ENCODE measurements at regions of chr21 and their contacts with region 1.

Region 1: GRCh38 chr21:14382835-14383594 is at the start of gene HSPA13:
- DNase-seq: peak; percentile 95 to 100 (median 98)
- ATAC-seq: peak; percentile 93
- H3K4me3 ChIP-seq: peak within 1 kb of the TSS; percentile 80
- H3K4me3 Mint-ChIP-seq: peak within 1 kb of the TSS; percentile 96
- H3K27ac ChIP-seq: peak within 1 kb of the TSS; percentile 86
- H3K27ac Mint-ChIP-seq: peak within 1 kb of the TSS; percentile 97
- H3K4me1 ChIP-seq: peaks cover 17% of the 10 kb centered on the region
- H3K4me1 Mint-ChIP-seq: peaks cover 44% of the 10 kb centered on the region
- H3K27me3 ChIP-seq: no peaks in the 10 kb centered on the region
- H3K27me3 Mint-ChIP-seq: no peaks in the 10 kb centered on the region
- CTCF ChIP-seq: no peak
- total RNA-seq, gene HSPA13: 39.6 to 41.4 TPM

Region 2: DNA sequence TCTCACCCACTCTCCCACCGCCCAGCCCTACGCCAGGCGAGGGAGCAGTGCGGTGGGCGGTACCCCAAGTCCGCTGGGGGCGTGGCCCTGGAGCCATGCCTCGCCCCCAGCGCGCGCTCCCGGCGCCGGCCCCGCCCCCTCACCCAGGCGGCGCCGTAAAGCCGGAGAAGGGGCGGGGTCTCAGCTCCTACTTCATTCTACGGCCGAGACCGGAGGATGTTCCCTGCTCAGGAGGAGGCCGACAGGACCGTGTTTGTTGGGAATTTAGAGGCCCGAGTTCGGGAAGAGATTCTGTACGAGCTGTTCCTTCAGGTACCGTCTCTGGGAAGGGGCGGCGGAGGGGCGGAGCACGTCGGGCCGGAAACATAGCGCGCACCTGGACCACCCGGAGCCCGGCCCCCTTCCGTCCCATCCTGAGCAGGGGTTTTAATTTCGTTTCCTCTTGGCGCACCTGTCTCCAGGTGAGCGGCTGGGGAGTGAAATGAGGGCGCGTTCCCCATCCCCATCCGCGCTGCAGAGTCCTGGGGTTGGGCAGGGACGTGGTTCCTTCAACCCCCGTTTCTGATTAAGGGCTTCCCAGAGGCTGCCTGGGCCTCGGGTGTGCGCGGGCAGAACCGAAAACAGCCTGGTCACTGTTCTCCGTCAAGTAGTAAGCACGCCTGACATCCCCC is 166.9 kb before region 1 on chr21 and contains the start of gene RBM11:
- CTCF ChIA-PET with region 1: no interaction called
- POLR2A ChIA-PET with region 1: interaction called, 3 read pairs
- intact Hi-C with region 1: loop called in 1 of 2 experiments (anchors 5 kb)
- DNase-seq: peak; percentile 56 to 90 (median 74)
- ATAC-seq: peak; percentile 97
- H3K4me3 ChIP-seq: peak within 1 kb of the TSS; percentile 81
- H3K4me3 Mint-ChIP-seq: peak within 1 kb of the TSS; percentile 92
- H3K27ac ChIP-seq: peak within 1 kb of the TSS in 1 of 2 donors; percentile 50
- H3K27ac Mint-ChIP-seq: peak within 1 kb of the TSS; percentile 66
- H3K4me1 ChIP-seq: peaks cover 10% of the 10 kb centered on the region
- H3K4me1 Mint-ChIP-seq: peaks cover 8% of the 10 kb centered on the region
- H3K27me3 ChIP-seq: no peaks in the 10 kb centered on the region
- H3K27me3 Mint-ChIP-seq: no peaks in the 10 kb centered on the region
- CTCF ChIP-seq: no peak
- total RNA-seq, gene RBM11: 17.4 to 18.7 TPM

Region 3: DNA sequence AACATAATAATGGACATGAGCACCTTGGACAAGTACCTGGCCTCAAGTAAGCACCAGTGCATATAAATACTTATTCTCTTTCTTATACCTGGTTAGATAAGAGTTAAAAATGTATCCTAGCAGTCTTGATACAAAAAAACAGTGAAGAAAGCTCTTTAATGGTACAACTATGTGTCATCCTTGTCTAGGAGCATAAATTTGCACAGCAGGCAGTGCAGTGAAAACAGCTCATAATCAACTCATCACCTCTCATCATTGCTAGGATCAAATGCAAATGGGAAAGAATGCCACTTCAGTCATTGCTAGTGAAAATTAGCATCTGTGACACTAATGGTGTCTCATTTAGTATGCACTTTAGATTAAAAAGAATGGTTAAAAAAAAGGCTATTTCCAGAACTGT is 155.5 kb after region 1 on chr21:
- CTCF ChIA-PET with region 1: no interaction called
- POLR2A ChIA-PET with region 1: no interaction called
- intact Hi-C with region 1: loop called in 1 of 2 experiments (anchors 5 kb)
- DNase-seq: no peak
- ATAC-seq: no peak
- H3K4me3 ChIP-seq: no peak overlapping the region
- H3K4me3 Mint-ChIP-seq: peak overlapping the region; percentile 26
- H3K27ac ChIP-seq: no peak overlapping the region
- H3K27ac Mint-ChIP-seq: peak overlapping the region; percentile 47
- H3K4me1 ChIP-seq: peaks cover 21% of the 10 kb centered on the region
- H3K4me1 Mint-ChIP-seq: peaks cover 88% of the 10 kb centered on the region
- H3K27me3 ChIP-seq: no peaks in the 10 kb centered on the region
- H3K27me3 Mint-ChIP-seq: no peaks in the 10 kb centered on the region
- CTCF ChIP-seq: no peak